ENCODE measurements at regions of chr3 and their contacts with region 1.

Region 1: GRCh38 chr3:146577662-146578061 is 27.5 kb downstream of the PLSCR5 start:
- DNase-seq: no peak
- H3K4me3 ChIP-seq: no peak overlapping the region
- H3K27ac ChIP-seq: no peak overlapping the region
- H3K4me1 ChIP-seq: no peaks in the 10 kb centered on the region
- H3K27me3 ChIP-seq: no peaks in the 10 kb centered on the region
- CTCF ChIP-seq: peak; percentile 61

Region 2: GRCh38 chr3:146218880-146219866 is 358.5 kb before region 1 on chr3:
- intact Hi-C with region 1: loop called (anchors 5 kb)
- DNase-seq: no peak
- H3K4me3 ChIP-seq: no peak overlapping the region
- H3K27ac ChIP-seq: no peak overlapping the region
- H3K4me1 ChIP-seq: peaks cover 43% of the 10 kb centered on the region
- H3K27me3 ChIP-seq: no peaks in the 10 kb centered on the region
- CTCF ChIP-seq: peak; percentile 78

Region 3: GRCh38 chr3:146334151-146334550 is 243.5 kb before region 1 on chr3:
- intact Hi-C with region 1: loop called (anchors 5 kb)
- DNase-seq: peak; percentile 20
- H3K4me3 ChIP-seq: no peak overlapping the region
- H3K27ac ChIP-seq: no peak overlapping the region
- H3K4me1 ChIP-seq: peaks cover 5% of the 10 kb centered on the region
- H3K27me3 ChIP-seq: no peaks in the 10 kb centered on the region
- CTCF ChIP-seq: peak; percentile 48

Measured in left ventricle myocardium inferior (tissue), 1 donor.